Head of caudate nucleus (tissue), 42 donors: ENCODE measurements at regions of chr1 and their contacts with region 1.

Region 1: DNA sequence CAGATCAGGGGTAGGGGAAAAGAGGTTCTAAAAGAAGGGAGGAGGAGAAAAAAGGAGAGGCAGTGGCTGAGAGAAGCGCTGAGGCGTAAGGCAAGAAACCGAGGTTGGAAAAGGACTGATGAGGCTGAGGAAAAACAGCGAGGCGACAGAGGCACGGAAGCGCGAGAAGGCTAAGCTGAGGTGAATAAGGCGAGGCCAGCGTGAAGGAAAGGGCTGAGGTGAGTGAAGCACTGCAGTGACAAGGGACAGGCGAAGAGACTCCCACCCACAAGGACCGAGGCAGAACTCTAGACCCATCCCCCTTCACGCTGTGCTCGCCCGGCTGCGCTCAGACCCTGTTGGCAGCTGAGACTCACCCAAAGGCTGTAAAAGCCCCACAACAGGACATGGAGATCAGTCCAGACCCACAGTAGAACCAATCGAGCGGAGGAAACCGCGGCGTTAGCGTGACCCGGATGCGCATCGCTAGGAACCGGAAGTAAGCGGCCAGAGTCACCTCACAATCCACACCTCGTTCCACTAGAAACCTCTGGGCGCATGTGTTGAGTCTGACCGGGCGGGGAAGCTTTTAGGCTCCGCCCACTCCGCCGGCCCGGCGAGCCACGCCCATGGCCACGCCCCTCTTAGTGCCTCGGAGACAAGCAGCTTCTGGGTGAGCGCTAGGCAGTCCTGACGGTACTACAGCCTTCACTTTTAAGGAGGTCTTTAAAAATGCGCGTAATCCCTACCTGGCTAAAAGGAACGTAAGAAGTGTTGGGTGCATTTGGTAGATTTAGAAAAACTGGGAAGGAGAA is at the start of gene EYA3:
- DNase-seq: peak; percentile 95 to 99 (median 98)

Region 2: GRCh38 chr1:27872059-27872801 is 216.1 kb before region 1 on chr1 and contains the start of gene THEMIS2:
- intact Hi-C with region 1: no loop called
- DNase-seq: peak; percentile 43 to 88 (median 76)

Region 3: GRCh38 chr1:28156821-28157220 is 68.5 kb after region 1 on chr1:
- intact Hi-C with region 1: loop called (anchors 10 kb)
- DNase-seq: peak in 12 of 42 donors; percentile 20 to 64 (median 37)

Region 4: GRCh38 chr1:28208818-28209441 is 120.6 kb after region 1 on chr1:
- intact Hi-C with region 1: loop called (anchors 5 kb)
- DNase-seq: peak; percentile 30 to 88 (median 74)